ENCODE measurements at regions of chr4 and their contacts with region 1.

Region 1: GRCh38 chr4:155946486-155946885 is 7.2 kb downstream of the CTSO start:
- DNase-seq: no peak
- ATAC-seq: peak in 1 of 4 donors; percentile 27
- H3K4me3 ChIP-seq: no peak overlapping the region
- H3K27ac ChIP-seq: no peak overlapping the region
- H3K4me1 ChIP-seq: no peaks in the 10 kb centered on the region
- H3K27me3 ChIP-seq: no peaks in the 10 kb centered on the region
- CTCF ChIP-seq: no peak

Region 2: DNA sequence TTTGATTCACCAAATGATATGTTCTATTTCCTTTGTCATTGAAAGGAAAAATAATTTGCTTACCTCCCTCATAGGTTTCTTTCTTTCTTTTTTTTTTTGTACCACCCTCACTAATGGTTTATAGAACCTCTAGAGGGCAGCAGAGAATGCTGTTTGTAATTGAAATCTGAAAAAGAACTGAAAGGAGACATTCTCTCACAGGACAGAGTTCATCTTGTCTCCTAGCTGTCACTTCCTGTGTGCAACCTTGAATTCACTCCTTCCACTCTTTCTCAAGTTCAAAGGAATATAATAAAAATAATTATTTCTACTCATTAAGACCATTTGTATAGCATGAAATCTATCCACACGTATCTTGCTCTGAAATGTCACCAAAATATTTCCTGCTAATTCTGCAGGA is 136.7 kb before region 1 on chr4:
- intact Hi-C with region 1: loop called (anchors 5 to 10 kb)
- DNase-seq: no peak
- ATAC-seq: peak in 3 of 4 donors; percentile 42 to 67 (median 56)
- H3K4me3 ChIP-seq: no peak overlapping the region
- H3K27ac ChIP-seq: no peak overlapping the region
- H3K4me1 ChIP-seq: no peaks in the 10 kb centered on the region
- H3K27me3 ChIP-seq: no peaks in the 10 kb centered on the region
- CTCF ChIP-seq: peak; percentile 66